ENCODE measurements at regions of chr6 and their contacts with region 1.

Region 1: DNA sequence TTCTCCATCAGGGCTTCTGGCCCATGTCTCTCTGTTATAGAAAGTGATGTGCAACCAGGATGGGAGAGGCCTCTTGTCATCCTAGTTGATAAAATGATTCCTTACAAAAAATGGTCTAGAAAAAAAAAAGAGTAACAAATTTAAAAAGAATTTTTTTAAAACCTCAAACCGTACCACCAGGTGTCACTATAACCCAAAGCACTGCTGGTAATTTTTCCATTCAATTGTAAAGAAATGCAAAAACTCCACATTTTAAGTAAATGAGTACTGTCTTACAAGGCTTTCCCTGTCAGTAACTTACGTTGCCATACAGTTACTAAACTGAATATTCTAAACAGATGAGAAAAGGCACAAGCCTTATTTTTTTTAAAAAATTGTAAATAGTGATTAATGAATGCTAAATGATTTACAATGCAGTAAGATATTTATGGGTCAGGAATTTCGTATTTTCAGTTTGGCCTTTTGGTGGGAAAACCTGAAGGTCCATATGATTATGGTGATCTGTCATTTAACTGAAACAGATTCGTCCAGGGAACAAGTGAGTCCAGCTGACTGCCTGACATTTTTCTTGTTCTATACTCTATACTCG is 95.4 kb downstream of the OGFRL1 start:
- DNase-seq: no peak
- H3K4me3 Mint-ChIP-seq: no peak overlapping the region
- H3K27ac Mint-ChIP-seq: no peak overlapping the region
- H3K4me1 Mint-ChIP-seq: no peaks in the 10 kb centered on the region
- H3K27me3 Mint-ChIP-seq: peaks cover 8% of the 10 kb centered on the region

Region 2: DNA sequence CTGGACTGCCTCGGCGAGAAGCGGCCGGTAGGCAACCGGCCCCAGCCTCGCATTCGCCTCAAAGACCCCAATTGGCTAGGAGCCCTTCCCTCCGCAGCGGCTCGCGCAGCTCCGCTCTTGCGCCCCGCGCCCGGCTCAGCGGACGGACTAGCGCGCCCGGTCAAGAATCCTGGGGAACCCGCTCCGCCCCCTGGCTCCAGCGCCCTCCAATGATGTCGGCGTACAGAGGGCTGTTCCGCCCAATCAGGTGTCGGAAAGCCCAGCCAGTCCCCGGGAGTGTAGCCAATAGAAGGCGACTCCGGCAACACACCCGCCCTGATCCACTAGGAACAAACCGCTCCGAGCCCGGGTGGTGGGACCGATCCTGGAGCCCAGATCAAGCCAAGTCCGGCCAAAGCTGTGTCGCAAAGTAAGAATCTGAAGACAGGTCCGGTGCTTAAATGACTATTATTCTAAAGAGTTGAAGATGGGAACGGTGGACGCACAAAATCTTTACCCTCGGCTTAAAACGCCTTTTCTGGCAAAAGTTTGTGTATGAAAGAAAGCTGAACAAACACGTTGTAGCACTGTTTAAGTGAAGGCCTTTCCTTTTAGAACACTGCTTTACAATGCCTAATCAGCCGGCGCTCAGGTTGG is 36.8 kb after region 1 on chr6:
- intact Hi-C with region 1: no loop called
- DNase-seq: no peak
- H3K4me3 Mint-ChIP-seq: no peak overlapping the region
- H3K27ac Mint-ChIP-seq: no peak overlapping the region
- H3K4me1 Mint-ChIP-seq: no peaks in the 10 kb centered on the region
- H3K27me3 Mint-ChIP-seq: peaks cover 57% of the 10 kb centered on the region

Region 3: DNA sequence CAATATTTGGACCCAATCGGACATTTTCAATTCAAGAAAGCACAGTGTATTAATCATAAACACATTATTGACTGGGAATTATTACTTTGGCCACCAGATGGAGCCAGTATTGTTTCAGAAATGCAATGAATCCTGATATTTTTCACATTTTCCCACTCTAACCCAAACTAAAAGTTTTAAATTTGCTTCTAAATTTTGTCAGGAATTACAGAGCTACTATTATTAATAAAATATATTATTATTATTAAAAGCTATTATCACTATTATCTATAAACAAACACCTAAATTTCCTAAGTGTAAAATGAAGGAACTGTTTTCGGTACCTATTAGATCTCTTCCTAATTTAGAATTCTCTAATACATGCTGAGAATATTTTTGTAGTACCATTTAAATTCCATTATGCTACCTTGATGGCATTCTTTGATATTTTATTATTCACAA is 150.0 kb after region 1 on chr6:
- intact Hi-C with region 1: loop called (anchors 10 kb)
- DNase-seq: no peak
- H3K4me3 Mint-ChIP-seq: no peak overlapping the region
- H3K27ac Mint-ChIP-seq: no peak overlapping the region
- H3K4me1 Mint-ChIP-seq: no peaks in the 10 kb centered on the region
- H3K27me3 Mint-ChIP-seq: no peaks in the 10 kb centered on the region

Region 4: DNA sequence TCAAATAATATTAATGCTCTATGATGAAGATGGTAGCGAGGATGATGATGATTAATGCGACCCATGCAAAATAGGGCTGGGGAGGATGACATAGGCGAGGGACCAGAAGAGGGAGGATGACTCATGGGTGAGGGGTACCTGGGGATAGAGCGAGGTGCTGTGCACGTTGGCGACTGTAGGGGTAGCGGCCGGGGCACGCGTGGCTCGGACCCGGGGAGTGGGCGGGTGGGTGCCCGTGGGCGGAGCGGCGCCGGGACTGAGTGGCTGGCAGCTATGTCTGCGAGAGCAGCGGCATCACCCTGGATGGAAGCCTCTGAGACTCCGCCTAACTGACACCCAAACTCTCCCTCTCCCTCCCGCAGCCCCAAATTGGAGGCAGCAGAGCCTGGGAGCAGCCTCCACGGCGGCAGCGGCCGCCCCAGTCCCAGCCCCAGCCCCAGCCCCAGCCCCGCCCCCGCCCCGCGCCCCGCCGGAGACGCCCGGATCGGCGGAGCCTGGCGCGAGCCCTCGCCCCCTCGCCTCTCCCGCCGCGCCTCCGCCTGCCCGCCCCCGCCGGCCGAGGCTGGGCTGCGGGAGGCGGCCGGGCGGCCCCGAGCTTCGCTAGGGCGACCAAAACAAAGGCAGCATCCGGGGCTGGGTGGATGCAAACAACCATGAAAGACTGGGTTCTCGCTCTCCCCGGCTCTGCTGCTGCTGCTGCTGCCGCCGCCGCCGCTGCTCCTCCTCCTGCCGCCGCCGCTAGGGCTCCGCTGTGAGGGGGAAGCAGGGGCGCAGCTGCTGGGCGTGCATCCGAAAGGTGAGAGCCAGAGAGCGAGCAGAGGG is 502.4 kb after region 1 on chr6 and contains the start of gene RIMS1:
- intact Hi-C with region 1: no loop called
- DNase-seq: no peak
- H3K4me3 Mint-ChIP-seq: peak within 1 kb of the TSS; percentile 75
- H3K27ac Mint-ChIP-seq: no peak within 1 kb of the TSS
- H3K4me1 Mint-ChIP-seq: peaks cover 5% of the 10 kb centered on the region
- H3K27me3 Mint-ChIP-seq: peaks cover 30% of the 10 kb centered on the region
- total RNA-seq, gene RIMS1: not detected in 2 replicates

Region 5: DNA sequence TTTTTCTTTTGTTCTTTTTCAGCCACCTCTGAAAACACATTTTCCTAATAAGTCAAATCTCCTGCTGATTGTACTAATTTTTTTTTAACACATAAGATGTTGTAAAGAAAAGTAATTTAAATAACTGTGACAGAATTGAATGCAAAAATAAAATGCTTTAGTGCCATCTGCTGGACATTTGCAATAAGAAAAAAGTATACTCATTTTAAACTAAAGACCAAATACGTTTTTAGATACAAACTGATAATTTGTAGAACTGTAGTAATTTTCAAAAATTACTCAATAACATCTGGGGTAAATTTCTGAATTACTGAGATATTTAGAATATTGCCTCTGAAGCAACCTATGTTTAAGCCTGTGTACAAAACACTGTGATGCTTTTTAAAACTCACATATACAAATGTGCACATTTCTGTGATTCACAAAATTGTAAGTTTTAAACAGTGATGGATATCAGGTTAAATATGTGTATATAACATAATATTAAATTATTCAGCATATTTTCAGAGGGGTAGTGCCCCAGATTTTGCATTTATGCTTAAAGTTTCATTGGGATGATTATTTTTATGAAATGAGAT is 701.1 kb after region 1 on chr6:
- intact Hi-C with region 1: loop called (anchors 2 kb)
- DNase-seq: no peak
- H3K4me3 Mint-ChIP-seq: no peak overlapping the region
- H3K27ac Mint-ChIP-seq: no peak overlapping the region
- H3K4me1 Mint-ChIP-seq: no peaks in the 10 kb centered on the region
- H3K27me3 Mint-ChIP-seq: peaks cover 3% of the 10 kb centered on the region

Measured in activated T-helper 1 cell treated with anti-CD3 and anti-CD28 coated beads, Interleukin-12 subunit alpha, Interleukin-12 subunit beta, Interleukin-2, Interleukin-4 antibody, amounts not matched to agents 30 ng/mL and 10 ng/mL and 1 ng/mL, durations not matched to agents 14 hours and 24 hours and 36 hours (primary cell).